ENCODE measurements at regions of chr7 and their contacts with region 1.

Region 1: GRCh38 chr7:56074371-56074791 is 10.3 kb downstream of the SUMF2 start:
- DNase-seq: peak; percentile 92
- H3K4me3 Mint-ChIP-seq: no peak overlapping the region
- H3K27ac Mint-ChIP-seq: no peak overlapping the region
- H3K4me1 Mint-ChIP-seq: peaks cover 5% of the 10 kb centered on the region
- H3K27me3 Mint-ChIP-seq: no peaks in the 10 kb centered on the region

Region 2: DNA sequence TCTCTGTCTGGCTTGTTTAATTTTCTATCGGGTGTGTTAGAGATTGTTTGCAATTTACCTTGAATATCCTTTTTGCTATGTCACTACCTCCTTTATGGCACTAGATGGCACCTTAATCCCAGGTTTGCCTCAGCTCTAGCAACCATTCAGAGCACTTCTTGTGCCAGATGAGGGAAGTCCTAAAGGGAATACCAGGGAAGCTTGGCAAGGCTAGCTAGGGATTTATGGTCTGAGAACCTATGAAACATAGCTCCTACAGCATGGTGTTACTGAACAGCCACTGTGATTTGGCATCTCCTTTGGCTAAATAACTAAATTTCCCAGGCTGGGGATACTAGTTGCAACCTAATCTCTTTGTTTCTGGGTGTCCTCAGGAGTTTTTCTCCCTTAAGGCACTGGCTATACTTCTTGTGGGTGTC is 433.1 kb before region 1 on chr7:
- intact Hi-C with region 1: loop called (anchors 1 kb)
- DNase-seq: peak; percentile 83
- H3K4me3 Mint-ChIP-seq: no peak overlapping the region
- H3K27ac Mint-ChIP-seq: no peak overlapping the region
- H3K4me1 Mint-ChIP-seq: peaks cover 8% of the 10 kb centered on the region
- H3K27me3 Mint-ChIP-seq: peaks cover 9% of the 10 kb centered on the region

Region 3: GRCh38 chr7:56009695-56010094 is 64.7 kb before region 1 on chr7:
- intact Hi-C with region 1: loop called (anchors 1 kb)
- DNase-seq: no peak
- H3K4me3 Mint-ChIP-seq: no peak overlapping the region
- H3K27ac Mint-ChIP-seq: no peak overlapping the region
- H3K4me1 Mint-ChIP-seq: peaks cover 3% of the 10 kb centered on the region
- H3K27me3 Mint-ChIP-seq: no peaks in the 10 kb centered on the region

Measured in activated CD4-positive, alpha-beta T cell treated with anti-CD3 and anti-CD28 coated beads, Interleukin-2, amount 10 ng/mL, durations not matched to agents 24 days and 14 days (primary cell).